PC-3 (cell line): ENCODE measurements at regions of chr6 and their contacts with region 1.

Region 1: GRCh38 chr6:140921366-140922226 is 1211.1 kb upstream of the GJE1 start:
- DNase-seq: peak; percentile 89
- ATAC-seq: peak; percentile 99
- H3K4me3 ChIP-seq: no peak overlapping the region
- H3K27ac ChIP-seq: peak overlapping the region; percentile 75
- H3K4me1 ChIP-seq: peaks cover 8% of the 10 kb centered on the region
- H3K27me3 ChIP-seq: no peaks in the 10 kb centered on the region
- CTCF ChIP-seq: peak; percentile 85

Region 2: DNA sequence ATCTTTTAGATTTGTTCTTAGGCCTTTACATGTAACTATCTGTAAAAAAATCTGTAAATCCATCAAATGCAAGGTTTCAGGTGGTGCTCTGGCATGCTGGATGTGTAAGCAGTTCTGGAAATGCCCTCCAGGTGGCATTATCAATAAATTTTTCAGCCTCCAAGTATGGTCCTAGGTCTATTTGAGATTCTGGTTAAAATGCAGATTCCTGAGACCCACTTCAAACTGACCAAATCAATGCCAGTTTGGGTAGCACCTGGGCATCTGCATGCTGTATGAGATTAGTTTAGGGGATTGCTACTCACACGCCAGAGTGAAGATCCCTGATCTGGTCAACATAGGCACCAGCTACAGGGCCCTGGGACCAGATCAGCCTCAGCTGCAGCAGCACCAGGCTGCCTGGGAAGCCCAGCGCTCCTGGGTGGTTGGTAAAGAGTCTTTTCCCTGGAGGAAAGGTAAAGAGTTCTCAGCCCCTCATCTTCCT is 1039.8 kb before region 1 on chr6:
- CTCF ChIA-PET with region 1: no interaction called
- POLR2A ChIA-PET with region 1: no interaction called
- intact Hi-C with region 1: loop called (anchors 5 kb)
- DNase-seq: peak; percentile 54
- ATAC-seq: peak; percentile 67
- H3K4me3 ChIP-seq: no peak overlapping the region
- H3K27ac ChIP-seq: no peak overlapping the region
- H3K4me1 ChIP-seq: peaks cover 18% of the 10 kb centered on the region
- H3K27me3 ChIP-seq: no peaks in the 10 kb centered on the region
- CTCF ChIP-seq: peak; percentile 74

Region 3: DNA sequence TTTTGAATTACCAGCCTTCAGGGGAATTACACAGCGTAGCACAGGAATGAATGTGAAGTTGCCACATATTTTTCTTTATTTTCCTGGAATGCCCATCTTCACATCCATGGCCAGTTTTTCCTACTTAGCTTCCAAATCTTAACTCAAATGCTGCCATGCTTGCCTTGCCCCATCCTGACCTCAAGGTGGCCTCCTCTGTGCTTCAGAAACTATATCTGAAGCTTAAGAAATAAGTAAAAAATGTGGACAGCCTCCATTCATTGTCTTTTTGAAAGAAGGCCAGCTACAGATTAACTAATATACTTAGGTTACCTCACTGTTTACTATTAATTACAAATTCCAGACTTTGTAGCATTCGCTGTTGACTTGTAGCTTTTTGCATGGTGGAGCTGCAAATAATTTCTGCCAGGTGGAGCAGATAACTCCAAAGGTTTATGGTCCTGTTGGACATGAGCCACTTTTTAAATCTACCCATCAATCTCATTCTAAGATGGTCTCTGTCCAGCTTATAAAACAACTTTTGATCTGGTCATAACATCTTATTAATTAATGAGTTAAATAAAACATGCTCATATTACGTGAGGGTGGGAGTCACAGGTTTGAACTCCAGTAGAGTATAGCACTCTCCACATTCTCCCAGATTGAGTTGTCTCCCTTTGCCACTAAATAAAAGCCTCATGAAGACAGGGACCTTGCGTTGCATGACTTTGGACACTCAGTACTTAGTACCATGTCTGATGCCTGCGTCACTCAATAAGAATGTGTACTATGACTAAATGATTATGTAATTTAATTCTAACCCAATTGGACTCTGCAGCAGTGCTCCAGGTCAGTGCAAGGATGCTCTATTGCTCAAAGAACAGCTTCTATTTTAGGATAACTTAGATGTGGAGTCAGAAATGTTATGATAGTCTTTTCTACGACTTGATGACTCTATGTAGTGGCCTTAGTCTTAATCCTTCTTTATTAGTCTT is 868.6 kb before region 1 on chr6:
- CTCF ChIA-PET with region 1: no interaction called
- POLR2A ChIA-PET with region 1: no interaction called
- intact Hi-C with region 1: loop called (anchors 10 kb)
- DNase-seq: peak; percentile 17
- ATAC-seq: no peak
- H3K4me3 ChIP-seq: no peak overlapping the region
- H3K27ac ChIP-seq: no peak overlapping the region
- H3K4me1 ChIP-seq: peaks cover 27% of the 10 kb centered on the region
- H3K27me3 ChIP-seq: no peaks in the 10 kb centered on the region
- CTCF ChIP-seq: peak; percentile 44

Region 4: DNA sequence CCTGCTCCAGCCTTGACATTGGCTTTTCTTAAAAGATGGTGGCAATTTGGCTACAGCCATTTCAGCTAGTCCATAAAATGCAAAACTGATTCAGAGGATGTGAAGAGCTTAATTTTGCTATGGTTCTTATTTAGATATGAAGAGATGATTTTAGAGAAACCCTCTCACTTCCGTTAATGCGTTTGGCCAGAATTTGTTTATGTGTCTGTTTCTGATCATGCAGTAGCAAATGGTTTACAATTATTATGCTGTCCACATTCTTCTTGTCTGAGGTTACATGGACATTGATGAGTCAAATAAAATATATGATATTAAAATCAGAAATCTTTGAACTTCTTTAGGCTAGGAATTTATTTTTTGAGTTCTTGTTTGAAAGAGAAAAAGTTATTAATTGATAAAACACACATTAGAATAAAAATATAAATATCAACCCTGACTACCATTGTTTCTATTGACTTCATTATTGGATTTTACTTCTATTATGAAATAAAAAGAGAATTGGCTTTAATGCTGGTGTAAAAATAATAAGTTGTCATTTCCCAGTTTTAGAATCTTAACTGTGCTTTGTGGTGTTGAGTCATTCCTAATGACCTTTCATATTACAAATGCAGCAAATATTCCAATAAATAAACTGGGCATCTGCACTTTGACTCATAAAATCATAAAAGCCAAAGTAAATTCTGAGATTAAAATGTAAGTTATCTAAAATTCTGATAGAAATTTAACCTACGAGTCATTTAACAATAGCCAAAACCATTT is 74.9 kb before region 1 on chr6:
- CTCF ChIA-PET with region 1: no interaction called
- POLR2A ChIA-PET with region 1: no interaction called
- intact Hi-C with region 1: loop called (anchors 1 kb)
- DNase-seq: peak; percentile 78
- ATAC-seq: peak; percentile 65
- H3K4me3 ChIP-seq: peak overlapping the region; percentile 29; the same call in 1 of the 2 replicates
- H3K27ac ChIP-seq: peak overlapping the region; percentile 62
- H3K4me1 ChIP-seq: peaks cover 33% of the 10 kb centered on the region
- H3K27me3 ChIP-seq: no peaks in the 10 kb centered on the region
- CTCF ChIP-seq: no peak